ENCODE measurements at regions of chr20 and their contacts with region 1.

Region 1: GRCh38 chr20:31560094-31560899 is 44.8 kb upstream of the ID1 start:
- DNase-seq: peak; percentile 86 to 95 (median 92)
- H3K4me3 ChIP-seq: no peak overlapping the region
- H3K27ac ChIP-seq: peak overlapping the region in 1 of 2 experiments; percentile 50
- H3K4me1 ChIP-seq: peaks cover 0 to 16% (median 13%) of the 10 kb centered on the region in 4 experiments
- H3K27me3 ChIP-seq: no peaks in the 10 kb centered on the region

Region 2: DNA sequence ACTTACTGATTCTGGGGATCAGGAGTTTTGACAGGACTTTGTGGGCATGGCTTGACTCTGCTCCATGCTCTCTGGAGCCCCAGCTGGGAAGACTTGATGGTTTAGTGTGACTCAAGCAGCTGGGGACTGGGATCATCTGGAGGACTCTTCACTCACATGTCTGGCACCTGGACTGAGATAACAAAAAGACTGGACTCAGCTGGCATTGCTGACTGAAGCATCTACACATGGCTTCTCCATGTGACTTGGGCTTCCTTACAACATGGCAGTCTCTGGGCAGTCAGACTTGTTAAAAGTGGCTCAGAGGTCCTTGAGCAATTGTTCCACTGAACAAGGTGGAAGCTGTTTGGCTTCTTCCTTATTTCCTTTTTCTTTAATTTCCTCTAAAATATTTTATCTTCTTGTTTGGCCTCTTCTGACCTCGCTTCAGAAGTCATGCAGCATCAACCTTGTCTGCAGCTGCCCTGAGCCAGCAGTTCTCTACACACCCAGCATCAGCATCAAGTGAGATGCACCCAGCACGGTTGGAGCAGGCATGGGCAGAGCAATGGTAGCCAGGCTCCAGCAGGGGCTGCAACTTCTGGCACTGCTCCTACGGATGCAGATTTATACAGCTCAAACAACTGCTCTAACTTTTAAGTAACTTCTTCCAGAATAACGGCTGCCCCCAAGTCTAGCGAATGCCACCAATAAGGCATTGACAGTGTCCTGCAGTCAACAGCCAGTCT is 51.6 kb before region 1 on chr20:
- CTCF ChIA-PET with region 1: no interaction called
- POLR2A ChIA-PET with region 1: no interaction called
- DNase-seq: no peak
- H3K4me3 ChIP-seq: no peak overlapping the region
- H3K27ac ChIP-seq: no peak overlapping the region
- H3K4me1 ChIP-seq: peaks cover 0 to 2% (median 0%) of the 10 kb centered on the region in 4 experiments
- H3K27me3 ChIP-seq: peaks cover 0 to 3% (median 0%) of the 10 kb centered on the region in 5 experiments

Region 3: GRCh38 chr20:31537890-31538289 is 22.4 kb before region 1 on chr20:
- CTCF ChIA-PET with region 1: interaction called, 10 read pairs
- POLR2A ChIA-PET with region 1: interaction called, 3 read pairs
- DNase-seq: peak in 2 of 3 donors; percentile 33
- H3K4me3 ChIP-seq: peak overlapping the region in 1 of 7 experiments; percentile 19
- H3K27ac ChIP-seq: peak overlapping the region in 1 of 2 experiments; percentile 19
- H3K4me1 ChIP-seq: peaks cover 4 to 21% (median 16%) of the 10 kb centered on the region in 4 experiments
- H3K27me3 ChIP-seq: no peaks in the 10 kb centered on the region

Region 4: DNA sequence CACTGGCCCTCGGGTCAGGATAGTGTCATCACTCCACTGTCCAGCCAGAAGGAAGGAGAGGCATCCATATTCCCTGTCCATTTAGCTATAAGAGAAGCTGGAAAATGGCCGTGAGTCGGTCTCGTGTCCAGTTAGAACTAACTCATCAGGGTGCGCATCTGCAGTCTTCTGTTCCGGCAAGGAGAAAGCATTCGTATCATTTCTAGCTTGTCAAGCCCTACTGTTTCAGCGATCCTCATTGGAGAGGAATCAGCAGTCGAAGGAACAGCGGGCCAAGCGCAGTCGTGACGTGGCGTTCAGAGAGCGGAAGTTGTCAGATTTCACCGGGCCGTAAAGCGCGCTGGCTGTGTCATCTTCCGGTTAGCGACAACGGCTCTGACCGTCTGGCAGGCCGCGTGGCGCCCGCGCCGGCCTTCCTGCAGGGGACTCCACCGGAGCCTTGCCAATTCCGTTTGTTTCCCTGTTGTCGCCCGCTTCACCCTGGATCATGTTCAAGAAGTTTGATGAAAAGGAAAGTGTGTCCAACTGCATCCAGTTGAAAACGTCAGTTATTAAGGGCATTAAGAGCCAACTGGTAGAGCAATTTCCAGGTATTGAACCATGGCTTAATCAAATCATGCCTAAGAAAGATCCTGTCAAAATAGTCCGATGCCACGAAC is 13.2 kb before region 1 on chr20:
- CTCF ChIA-PET with region 1: interaction called, 94 read pairs
- POLR2A ChIA-PET with region 1: no interaction called
- DNase-seq: peak; percentile 89 to 95 (median 93)
- H3K4me3 ChIP-seq: peak overlapping the region; percentile 15 to 82 (median 72)
- H3K27ac ChIP-seq: peak overlapping the region; percentile 83 to 94
- H3K4me1 ChIP-seq: peaks cover 0 to 16% (median 10%) of the 10 kb centered on the region in 4 experiments
- H3K27me3 ChIP-seq: no peaks in the 10 kb centered on the region

Region 5: DNA sequence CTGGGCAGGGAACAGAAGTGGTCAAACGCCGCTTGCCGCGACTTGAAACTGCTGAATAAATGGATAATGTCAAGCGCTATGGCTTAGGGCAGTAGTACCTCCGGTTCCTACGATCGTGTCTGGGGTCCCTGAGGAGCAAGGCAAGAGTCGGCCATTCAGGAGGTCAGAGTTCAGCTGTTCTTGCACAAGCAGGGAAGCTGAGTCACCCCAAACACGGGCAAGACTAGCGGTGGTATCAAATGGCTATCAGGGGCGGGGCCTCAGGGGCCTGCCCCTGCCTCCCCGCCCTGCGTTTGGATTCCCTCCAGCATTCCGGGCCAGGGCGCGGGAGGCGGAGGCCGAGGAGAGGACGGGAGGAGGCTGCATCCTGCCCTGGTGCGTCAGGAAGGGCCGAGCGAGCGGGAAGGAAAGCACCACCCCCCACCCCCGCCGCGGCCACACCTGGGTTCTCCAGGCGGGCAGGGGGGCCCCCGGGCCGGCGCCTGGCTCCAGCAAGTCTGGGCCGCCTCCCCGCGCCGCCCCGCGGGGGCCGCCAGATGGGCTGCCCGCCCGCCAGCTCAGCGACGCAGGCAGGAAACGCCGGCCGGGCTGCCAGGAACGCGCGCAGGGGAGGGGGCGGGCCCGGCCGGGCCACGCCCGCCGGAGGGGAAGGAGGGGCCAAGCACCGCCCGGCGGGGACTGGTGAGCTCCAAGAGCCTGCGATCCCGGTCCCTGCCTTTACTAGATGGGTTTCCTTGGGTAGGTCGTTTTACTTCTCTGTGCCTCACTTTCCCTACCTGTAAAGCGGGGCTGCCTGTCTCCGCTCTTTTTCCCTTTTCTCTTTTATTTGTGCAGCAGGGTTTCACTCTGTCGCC is 12.6 kb after region 1 on chr20:
- CTCF ChIA-PET with region 1: interaction called, 94 read pairs
- POLR2A ChIA-PET with region 1: interaction called, 3 read pairs
- DNase-seq: peak; percentile 88 to 97 (median 95)
- H3K4me3 ChIP-seq: peak overlapping the region; percentile 53 to 92 (median 76)
- H3K27ac ChIP-seq: peak overlapping the region; percentile 77 to 86
- H3K4me1 ChIP-seq: peaks cover 0 to 44% (median 37%) of the 10 kb centered on the region in 4 experiments
- H3K27me3 ChIP-seq: no peaks in the 10 kb centered on the region

Region 6: DNA sequence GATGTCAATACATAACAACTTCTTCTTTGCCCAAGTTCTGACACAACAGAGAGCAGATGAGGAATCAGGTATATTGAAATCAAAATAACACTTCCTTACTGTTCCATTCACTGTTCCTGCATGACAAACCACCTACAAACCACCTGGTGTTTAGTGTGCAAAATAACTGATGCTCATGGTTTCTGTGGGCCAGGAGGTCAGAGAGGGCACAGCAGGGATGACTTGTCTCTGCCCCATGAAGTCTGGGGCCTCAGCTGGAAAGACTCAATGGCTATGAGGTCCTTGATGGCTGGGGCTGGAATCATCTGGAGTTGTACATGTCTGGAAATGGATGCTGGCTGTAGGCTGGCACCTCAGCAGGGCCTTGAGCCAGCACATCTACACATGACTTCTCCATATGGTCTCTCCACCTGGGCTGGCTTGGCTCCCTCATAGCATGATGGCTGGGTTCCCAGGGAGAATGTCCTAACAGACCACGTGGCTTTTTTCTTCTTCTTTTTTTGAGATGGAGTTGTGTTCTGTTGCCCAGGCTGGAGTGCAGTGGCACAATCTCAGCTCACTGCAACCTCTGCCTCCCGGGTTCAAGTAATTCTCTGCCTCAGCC is 70.0 kb after region 1 on chr20:
- CTCF ChIA-PET with region 1: interaction called, 14 read pairs
- POLR2A ChIA-PET with region 1: no interaction called
- DNase-seq: no peak
- H3K4me3 ChIP-seq: no peak overlapping the region
- H3K27ac ChIP-seq: no peak overlapping the region
- H3K4me1 ChIP-seq: no peaks in the 10 kb centered on the region
- H3K27me3 ChIP-seq: no peaks in the 10 kb centered on the region

Measured in common myeloid progenitor, CD34-positive (primary cell).